Activated T-helper 2 cell treated with anti-CD3 and anti-CD28 coated beads, Interferon-gamma antibody, Interleukin-2, Interleukin-4, amounts not matched to agents 10 μg/mL and 5 μg/mL and 100 μg/mL, durations not matched to agents 14 hours and 24 hours and 36 hours (primary cell): ENCODE measurements at regions of chr16 and their contacts with region 1.

Region 1: DNA sequence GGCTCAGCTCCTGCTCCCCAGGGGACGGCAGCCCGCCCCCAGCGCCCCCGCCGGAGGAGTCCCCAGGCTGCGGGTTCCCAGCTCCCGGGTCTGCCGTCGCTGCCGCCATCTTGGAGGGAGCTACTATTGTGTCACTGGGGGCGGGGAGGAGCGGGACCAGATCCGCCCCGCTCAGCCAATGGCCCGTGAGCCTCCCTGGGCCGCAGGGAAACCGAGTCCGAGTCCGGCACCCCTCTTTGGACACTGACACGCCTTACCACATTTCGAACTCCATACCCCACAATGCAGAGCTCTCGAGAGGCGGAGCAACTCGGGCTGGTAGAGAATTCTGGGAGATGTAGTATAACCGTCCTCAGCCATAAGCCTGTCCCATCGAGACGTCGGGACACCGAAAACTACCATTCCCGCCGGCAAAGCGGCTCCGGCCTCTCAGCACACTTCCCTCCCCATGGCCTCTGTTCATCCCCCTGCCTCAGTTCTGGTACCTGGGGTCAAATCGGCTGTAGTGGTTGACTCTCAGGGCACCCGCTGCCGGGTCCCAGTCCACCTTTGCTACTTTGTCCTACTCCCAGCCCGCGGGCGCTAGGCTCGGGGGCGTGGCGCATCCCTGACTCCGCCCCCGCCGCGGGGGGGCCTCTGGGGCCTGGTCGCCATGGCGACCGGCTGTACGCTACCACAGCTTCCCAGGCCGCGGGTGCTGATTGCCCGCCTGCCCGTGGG is at the starts of genes RANBP10 and TSNAXIP1:
- DNase-seq: peak; percentile 97
- H3K4me3 Mint-ChIP-seq: peak within 1 kb of the TSS; percentile 95
- H3K27ac Mint-ChIP-seq: peak within 1 kb of the TSS; percentile 94
- H3K4me1 Mint-ChIP-seq: peaks cover 32% of the 10 kb centered on the region
- H3K27me3 Mint-ChIP-seq: no peaks in the 10 kb centered on the region
- total RNA-seq, gene RANBP10: 16.5 and 17.3 TPM in 2 replicates
- total RNA-seq, gene TSNAXIP1: 0.51 and 1.0 TPM in 2 replicates

Region 2: DNA sequence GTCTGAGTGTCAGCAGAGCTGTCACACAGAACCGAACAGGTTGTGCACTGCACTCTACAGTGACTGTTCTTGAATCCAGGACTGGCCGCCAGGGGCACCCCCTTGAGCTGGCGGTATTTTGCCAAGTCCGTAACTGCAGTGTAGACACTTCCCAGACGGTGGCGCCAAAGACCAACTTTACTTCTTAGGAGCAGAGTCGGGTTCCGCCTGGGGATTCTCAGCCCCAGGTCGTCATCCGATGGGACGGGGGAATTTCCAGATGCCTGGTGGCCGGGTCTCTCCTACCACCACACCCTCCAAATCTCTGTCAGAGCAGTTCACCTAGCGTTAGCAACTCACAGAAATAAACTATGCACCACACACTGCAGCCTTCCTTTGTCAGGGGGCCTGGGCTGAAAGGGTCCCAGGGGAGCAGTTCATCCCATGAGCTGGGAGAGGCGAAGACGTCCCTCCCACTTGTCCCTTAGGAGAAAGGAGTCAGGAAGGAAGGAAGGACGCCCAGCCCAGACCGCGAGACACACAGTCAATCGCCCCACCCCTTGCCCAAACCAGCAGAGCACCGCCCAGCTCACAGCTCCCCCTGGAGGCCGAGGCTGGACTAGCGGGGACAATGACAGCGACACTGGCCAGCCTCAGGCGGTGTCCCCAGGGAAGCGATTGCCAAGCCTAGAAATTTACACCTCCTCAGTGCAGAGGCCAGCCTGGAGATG is 285.3 kb before region 1 on chr16:
- intact Hi-C with region 1: loop called (anchors 10 kb)
- DNase-seq: peak; percentile 94
- H3K4me3 Mint-ChIP-seq: peak overlapping the region; percentile 85
- H3K27ac Mint-ChIP-seq: peak overlapping the region; percentile 98
- H3K4me1 Mint-ChIP-seq: peaks cover 18% of the 10 kb centered on the region
- H3K27me3 Mint-ChIP-seq: peaks cover 5% of the 10 kb centered on the region

Region 3: DNA sequence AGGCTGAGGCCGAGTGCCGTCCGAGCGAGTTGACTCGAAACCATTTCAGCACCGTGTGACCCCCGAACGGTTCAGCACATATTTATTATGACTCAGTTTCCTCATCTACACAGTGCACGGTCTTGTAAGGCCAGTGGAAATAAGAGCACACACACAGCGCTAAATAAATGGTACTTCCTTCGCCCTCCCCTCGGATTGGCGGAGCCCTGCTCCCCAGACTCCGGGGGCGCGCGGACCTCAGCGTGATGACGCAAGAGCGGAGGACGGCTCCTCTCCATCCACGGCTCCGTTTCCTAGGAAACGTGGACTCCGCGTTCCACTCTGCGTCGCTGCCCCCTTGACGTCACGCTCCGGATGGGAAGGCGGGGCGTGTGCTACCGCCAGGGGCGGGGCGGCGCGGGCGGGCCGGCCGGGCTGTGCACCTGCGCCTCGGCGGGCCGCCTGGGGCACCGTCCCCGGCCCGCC is 146.0 kb before region 1 on chr16 and contains the start of gene PARD6A:
- intact Hi-C with region 1: loop called (anchors 2 kb)
- DNase-seq: peak; percentile 95
- H3K4me3 Mint-ChIP-seq: peak within 1 kb of the TSS; percentile 92
- H3K27ac Mint-ChIP-seq: peak within 1 kb of the TSS; percentile 96
- H3K4me1 Mint-ChIP-seq: peaks cover 15% of the 10 kb centered on the region
- H3K27me3 Mint-ChIP-seq: no peaks in the 10 kb centered on the region
- total RNA-seq, gene PARD6A: 10.7 and 11.5 TPM in 2 replicates

Region 4: GRCh38 chr16:67760206-67760955 is 46.2 kb before region 1 on chr16:
- intact Hi-C with region 1: no loop called
- DNase-seq: no peak
- H3K4me3 Mint-ChIP-seq: no peak overlapping the region
- H3K27ac Mint-ChIP-seq: no peak overlapping the region
- H3K4me1 Mint-ChIP-seq: peaks cover 11% of the 10 kb centered on the region
- H3K27me3 Mint-ChIP-seq: no peaks in the 10 kb centered on the region

Region 5: DNA sequence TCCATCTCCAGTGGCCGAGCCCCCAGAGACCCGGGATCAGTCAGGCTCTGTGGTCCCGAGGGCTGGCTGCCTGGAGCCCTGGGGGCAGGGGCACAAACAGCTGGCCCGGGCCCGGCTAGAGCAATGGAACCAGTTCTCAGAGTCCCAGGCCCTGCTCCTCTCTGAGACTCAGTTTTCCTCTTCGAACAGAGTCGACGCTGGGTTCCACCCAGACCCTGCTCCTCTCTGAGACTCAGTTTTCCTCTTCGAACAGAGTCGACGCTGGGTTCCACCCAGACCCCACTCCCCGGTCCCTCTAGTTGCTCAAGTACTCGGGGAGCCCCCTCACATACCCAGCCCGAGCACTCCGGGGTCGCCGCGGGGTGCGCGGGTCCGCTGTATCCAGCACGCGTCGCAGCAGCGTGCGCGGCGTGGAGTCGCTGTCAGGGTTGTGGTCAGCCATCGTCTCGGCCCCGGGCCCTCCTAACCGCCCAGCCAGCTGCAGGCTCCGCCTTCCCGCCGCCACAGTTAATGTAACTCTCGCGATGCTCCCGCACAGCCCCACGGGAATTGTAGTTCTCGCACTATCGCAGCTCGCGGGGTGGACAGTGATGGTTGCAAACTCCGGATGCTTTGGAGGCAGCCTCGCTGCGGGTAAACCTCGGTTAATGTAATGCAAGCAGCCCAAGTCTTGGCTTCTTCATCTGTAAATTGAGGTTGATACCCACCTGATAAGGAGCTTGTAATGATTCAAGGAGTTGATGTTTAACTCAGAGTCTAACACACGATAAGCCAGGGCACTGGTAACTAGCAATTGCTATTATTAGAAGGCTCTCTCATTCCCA is 27.0 kb after region 1 on chr16:
- intact Hi-C with region 1: loop called (anchors 1 kb)
- DNase-seq: peak; percentile 93
- H3K4me3 Mint-ChIP-seq: peak overlapping the region; percentile 97
- H3K27ac Mint-ChIP-seq: peak overlapping the region; percentile 89
- H3K4me1 Mint-ChIP-seq: peaks cover 11% of the 10 kb centered on the region
- H3K27me3 Mint-ChIP-seq: no peaks in the 10 kb centered on the region